Left lung (tissue), 14 donors: ENCODE measurements at regions of chr17 and their contacts with region 1.

Region 1: GRCh38 chr17:82030470-82031302 is 792 bp upstream of the RAC3 start:
- DNase-seq: peak; percentile 71 to 96 (median 86)
- ATAC-seq: peak; percentile 95
- H3K4me3 ChIP-seq: peak overlapping the region; percentile 30 to 55
- H3K27ac ChIP-seq: peak overlapping the region in 1 of 2 donors; percentile 31
- H3K4me1 ChIP-seq: peaks cover 5 to 32% of the 10 kb centered on the region in 2 donors
- H3K27me3 ChIP-seq: peaks cover 0 to 12% of the 10 kb centered on the region in 2 donors
- CTCF ChIP-seq: peak; percentile 93 to 96

Region 2: DNA sequence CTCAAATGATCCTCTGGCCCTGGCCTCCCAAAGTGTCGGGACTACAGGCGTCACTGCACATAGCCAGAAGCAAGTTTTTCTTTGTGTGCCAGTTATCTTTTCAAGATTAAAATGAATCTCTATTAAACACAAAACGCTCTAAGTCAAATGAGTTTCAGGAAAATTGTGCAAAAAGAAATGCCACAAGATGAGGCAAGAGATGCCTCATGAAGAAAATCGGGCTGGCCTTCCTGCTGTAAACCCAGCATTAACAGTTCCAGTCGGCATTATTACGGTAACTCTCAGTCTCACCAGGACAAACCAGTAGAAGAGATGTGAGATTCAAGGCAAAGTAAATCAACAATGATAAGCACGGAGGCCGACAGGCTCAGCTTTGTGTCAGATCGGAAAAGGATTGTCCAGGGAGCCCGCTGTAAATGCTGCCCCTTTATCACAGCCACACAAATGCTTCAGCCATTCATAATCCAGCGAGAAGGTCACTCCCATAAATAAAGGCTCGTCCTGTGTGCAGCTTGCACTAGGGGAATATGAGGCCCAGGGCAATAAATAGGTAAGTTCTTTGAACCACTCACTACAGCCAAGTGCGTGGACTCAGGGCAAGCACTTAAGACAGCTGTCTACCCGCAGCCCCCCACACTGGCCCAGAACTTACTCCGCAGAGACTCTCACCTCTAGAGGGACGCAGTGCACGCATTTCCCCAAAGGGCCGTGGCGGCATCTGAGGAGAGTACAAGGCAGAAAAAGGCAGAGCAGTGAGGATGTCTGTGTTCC is 421.0 kb before region 1 on chr17:
- intact Hi-C with region 1: no loop called
- DNase-seq: no peak
- ATAC-seq: no peak
- H3K4me3 ChIP-seq: no peak overlapping the region
- H3K27ac ChIP-seq: peak overlapping the region in 1 of 2 donors; percentile 40
- H3K4me1 ChIP-seq: peaks cover 0 to 21% of the 10 kb centered on the region in 2 donors
- H3K27me3 ChIP-seq: no peaks in the 10 kb centered on the region
- CTCF ChIP-seq: no peak

Region 3: GRCh38 chr17:82153745-82154375 is 123.2 kb after region 1 on chr17:
- intact Hi-C with region 1: loop called in 1 of 2 experiments (anchors 2 kb)
- DNase-seq: peak; percentile 46 to 94 (median 78)
- ATAC-seq: peak; percentile 97
- H3K4me3 ChIP-seq: no peak overlapping the region
- H3K27ac ChIP-seq: no peak overlapping the region
- H3K4me1 ChIP-seq: peaks cover 0 to 11% of the 10 kb centered on the region in 2 donors
- H3K27me3 ChIP-seq: no peaks in the 10 kb centered on the region
- CTCF ChIP-seq: peak; percentile 89 to 96